Ascending aorta (tissue), 2 donors: ENCODE measurements at regions of chr22 and their contacts with region 1.

Region 1: GRCh38 chr22:45212306-45212709 is 28.4 kb downstream of the KIAA0930 start:
- DNase-seq: peak; percentile 71 to 95
- H3K4me3 ChIP-seq: peak overlapping the region; percentile 56 to 59
- H3K27ac ChIP-seq: peak overlapping the region; percentile 70 to 71
- H3K4me1 ChIP-seq: peaks cover 14 to 43% of the 10 kb centered on the region in 2 donors
- H3K27me3 ChIP-seq: no peaks in the 10 kb centered on the region
- CTCF ChIP-seq: no peak

Region 2: DNA sequence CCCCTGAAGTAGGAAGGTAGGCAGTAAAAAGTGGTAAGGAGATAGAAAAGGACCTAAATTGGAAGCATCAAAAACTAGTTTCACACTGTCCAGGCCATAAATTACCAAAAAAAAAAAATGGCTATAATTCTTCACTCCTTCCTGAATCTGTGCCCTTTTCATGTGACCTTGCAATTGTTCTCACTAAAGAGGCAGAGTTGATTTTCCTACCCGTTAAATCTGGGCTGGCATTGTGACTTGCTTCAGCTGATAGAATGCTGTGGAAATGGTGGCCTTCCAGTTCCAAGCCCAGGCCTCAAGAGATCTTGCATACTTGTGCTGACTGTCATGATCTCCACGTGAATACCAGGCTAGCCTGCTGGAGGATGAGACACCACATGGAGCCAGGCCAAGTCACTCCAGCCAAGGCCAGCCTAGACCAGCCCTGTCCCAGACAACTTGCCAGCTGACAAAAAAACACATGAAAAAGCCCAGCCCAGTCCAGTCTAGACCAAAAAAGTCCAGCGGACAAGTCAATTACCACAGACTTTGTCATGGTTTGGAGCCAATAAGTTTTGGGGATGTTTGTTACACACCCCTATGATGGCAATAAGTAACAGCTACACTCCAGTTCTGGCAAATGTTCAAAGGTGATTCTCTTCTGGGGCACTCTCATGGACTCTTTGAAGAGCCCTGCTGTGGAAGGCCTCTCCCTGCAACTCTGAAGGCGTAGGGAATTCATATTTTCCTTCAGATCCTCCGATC is 100.0 kb before region 1 on chr22:
- intact Hi-C with region 1: no loop called
- DNase-seq: no peak
- H3K4me3 ChIP-seq: no peak overlapping the region
- H3K27ac ChIP-seq: no peak overlapping the region
- H3K4me1 ChIP-seq: no peaks in the 10 kb centered on the region
- H3K27me3 ChIP-seq: no peaks in the 10 kb centered on the region
- CTCF ChIP-seq: no peak

Region 3: DNA sequence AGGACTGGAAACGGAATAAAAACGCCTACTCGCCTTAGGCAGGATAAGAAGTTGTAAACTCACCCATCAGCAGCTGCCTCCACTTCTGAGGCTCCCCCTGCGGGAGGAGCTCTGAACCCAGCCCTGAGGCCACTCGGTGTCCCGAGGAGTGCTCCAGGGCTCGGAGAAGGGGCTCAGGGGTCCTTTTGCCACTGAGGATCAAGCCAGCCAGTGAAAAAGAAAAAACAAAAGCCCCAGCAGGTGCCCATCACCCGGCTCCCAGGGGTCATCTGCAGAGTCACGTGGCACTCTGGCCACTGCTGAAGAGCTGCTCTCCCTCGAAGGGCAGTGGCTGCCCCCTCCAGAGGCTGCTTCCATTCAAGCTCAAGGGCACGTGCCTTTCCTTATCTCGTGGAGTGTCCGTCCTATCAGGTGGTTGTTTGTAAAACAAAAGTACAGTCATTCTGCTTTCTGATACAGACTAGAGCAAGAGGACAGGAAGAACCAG is 19.6 kb before region 1 on chr22:
- intact Hi-C with region 1: no loop called
- DNase-seq: no peak
- H3K4me3 ChIP-seq: no peak overlapping the region
- H3K27ac ChIP-seq: no peak overlapping the region
- H3K4me1 ChIP-seq: no peaks in the 10 kb centered on the region
- H3K27me3 ChIP-seq: no peaks in the 10 kb centered on the region
- CTCF ChIP-seq: no peak

Region 4: DNA sequence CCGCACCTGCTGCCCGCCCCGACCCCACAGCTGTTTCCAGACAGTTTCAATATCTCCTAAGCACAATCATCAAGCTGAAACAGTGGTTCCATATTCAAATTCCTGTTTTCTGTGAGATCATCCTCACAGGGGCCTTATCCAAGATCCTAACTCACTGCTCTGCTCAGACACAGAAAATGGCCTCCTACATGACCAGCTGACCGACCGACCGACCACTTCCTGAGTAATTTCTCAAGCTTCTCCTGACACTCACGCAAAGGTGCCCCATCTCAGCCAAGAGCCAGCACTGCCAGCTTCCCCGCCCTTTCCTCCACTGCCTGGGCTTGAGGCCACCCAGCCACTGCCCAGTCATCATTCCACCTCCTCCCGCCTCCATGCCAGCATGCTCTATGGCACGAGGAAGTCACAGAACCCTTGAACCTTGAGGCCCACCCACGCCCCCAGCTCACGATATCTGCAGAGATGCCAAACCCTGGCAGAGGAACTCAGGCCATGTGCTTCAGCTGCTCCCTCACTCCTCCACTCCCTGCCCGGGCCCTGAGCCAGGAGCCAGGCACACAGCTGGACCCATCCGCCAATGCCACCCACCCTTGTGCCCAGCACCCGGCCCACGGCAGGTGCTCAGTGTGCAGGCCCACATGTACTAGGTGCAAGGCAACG is 14.3 kb after region 1 on chr22:
- intact Hi-C with region 1: no loop called
- DNase-seq: no peak
- H3K4me3 ChIP-seq: no peak overlapping the region
- H3K27ac ChIP-seq: peak overlapping the region; percentile 27 to 35
- H3K4me1 ChIP-seq: peaks cover 5 to 6% of the 10 kb centered on the region in 2 donors
- H3K27me3 ChIP-seq: no peaks in the 10 kb centered on the region
- CTCF ChIP-seq: no peak

Region 5: DNA sequence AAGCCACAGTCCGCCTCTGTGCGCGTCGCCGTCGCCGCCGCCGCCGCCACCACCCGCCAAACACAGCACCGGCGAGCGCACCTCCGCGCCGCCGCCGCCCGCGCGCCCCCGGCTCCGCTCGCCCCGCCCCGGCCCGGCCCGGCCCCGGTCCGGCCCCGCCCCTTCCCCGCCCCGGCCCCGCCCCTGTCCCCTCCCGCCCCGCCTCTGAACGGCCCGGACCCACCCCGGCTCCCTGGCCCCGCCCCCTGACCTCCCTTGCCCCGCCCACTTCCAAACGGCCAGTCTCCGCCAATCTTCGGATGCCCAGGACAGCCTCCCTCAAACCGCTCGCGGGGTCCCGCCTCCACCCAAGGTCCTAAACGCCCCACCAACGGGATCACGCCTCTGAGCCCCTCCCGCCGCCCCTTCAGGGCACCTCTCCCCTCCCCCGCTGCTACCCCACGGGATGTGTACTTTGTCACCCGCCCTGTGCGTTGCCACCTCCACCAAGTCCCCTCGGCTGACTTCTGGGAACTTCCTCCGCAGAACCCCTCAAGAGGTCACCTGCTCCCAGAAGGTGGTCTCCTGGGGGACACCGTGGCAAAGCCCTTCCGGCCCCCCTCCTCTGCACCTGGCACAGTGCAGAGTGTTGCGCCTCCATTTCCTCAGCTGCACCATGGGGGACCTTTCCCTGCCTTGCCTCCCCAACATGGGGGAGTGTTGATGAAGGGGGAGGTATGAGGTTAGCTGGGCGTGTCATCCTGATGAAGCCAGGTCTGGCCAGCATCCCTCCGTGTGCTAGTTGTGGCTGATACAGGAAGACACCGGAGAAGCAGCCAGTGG is 28.7 kb after region 1 on chr22 and contains the start of gene KIAA0930:
- intact Hi-C with region 1: loop called (anchors 1 kb)
- DNase-seq: peak; percentile 54 to 91
- H3K4me3 ChIP-seq: peak within 1 kb of the TSS; percentile 69 to 95
- H3K27ac ChIP-seq: peak within 1 kb of the TSS; percentile 69 to 76
- H3K4me1 ChIP-seq: peaks cover 8 to 19% of the 10 kb centered on the region in 2 donors
- H3K27me3 ChIP-seq: no peaks in the 10 kb centered on the region
- CTCF ChIP-seq: no peak
- total RNA-seq, gene KIAA0930: 60.0 TPM

Region 6: DNA sequence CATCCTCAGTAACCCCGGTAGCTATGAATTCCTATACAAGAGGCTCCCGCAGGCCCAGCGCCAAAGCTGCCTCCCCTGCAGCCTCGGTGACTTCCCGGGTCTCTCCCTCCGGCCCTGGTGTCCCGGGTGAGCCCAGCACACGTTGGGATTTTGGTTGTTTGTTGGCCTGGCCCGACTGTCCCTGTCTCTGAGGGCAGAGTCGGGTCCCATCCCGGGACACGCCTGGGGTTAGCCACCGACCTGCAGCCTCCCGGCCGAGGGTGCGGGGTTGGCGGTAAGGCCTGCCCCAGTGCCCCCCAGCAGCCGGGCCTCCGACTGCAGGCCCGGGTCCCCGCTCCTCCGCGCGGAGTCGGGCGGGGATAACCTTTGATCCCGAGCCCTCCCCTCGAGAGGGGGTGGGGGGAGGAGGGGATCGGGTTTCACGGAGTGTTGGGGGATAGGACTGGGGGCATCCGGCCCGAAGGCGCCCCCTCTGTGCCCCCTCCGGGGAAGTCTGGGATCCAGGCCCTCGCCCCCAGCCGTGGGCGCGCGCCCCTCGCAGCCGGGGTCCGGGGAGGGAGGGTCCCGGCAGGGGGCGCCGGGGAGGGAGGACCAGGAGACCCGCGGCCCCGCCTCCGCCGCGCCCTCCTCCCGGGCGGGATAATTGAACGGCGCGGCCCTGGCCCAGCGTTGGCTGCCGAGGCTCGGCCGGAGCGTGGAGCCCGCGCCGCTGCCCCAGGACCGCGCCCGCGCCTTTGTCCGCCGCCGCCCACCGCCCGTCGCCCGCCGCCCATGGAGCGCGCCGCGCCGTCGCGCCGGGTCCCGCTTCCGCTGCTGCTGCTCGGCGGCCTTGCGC is 290.1 kb after region 1 on chr22 and contains the start of gene FBLN1:
- intact Hi-C with region 1: no loop called
- DNase-seq: no peak
- H3K4me3 ChIP-seq: peak within 1 kb of the TSS; percentile 56 to 70
- H3K27ac ChIP-seq: peak within 1 kb of the TSS; percentile 66 to 72
- H3K4me1 ChIP-seq: peaks cover 0 to 22% of the 10 kb centered on the region in 2 donors
- H3K27me3 ChIP-seq: no peaks in the 10 kb centered on the region
- CTCF ChIP-seq: peak in 2 of 3 experiments; percentile 16 to 30
- total RNA-seq, gene FBLN1: 580 TPM